ENCODE measurements at regions of chr12 and their contacts with region 1.

Region 1: GRCh38 chr12:2710701-2711100 is 84.1 kb upstream of the FKBP4 start:
- DNase-seq: no peak

Region 2: GRCh38 chr12:2324387-2324786 is 386.3 kb before region 1 on chr12:
- CTCF ChIA-PET with region 1: no interaction called
- POLR2A ChIA-PET with region 1: no interaction called
- DNase-seq: no peak

Region 3: GRCh38 chr12:2358986-2359658 is 351.6 kb before region 1 on chr12:
- CTCF ChIA-PET with region 1: interaction called, 13 read pairs
- POLR2A ChIA-PET with region 1: no interaction called
- DNase-seq: no peak